WTC11 (cell line): ENCODE measurements at regions of chr17 and their contacts with region 1.

Region 1: GRCh38 chr17:17280613-17281549 is at the start of gene COPS3:
- DNase-seq: peak; percentile 95
- ATAC-seq: peak; percentile 94
- H3K4me3 Mint-ChIP-seq: peak within 1 kb of the TSS; percentile 84
- H3K27ac Mint-ChIP-seq: peak within 1 kb of the TSS; percentile 98
- H3K4me1 Mint-ChIP-seq: peaks cover 19% of the 10 kb centered on the region
- H3K27me3 Mint-ChIP-seq: no peaks in the 10 kb centered on the region; the same call in 1 of the 2 replicates
- CTCF ChIP-seq: no peak
- total RNA-seq, gene COPS3: 71.6 to 78.3 TPM (median 74.8 TPM) in 3 replicates

Region 2: GRCh38 chr17:17269926-17270773 is 10.7 kb before region 1 on chr17:
- CTCF ChIA-PET with region 1: interaction called, 17 read pairs
- POLR2A ChIA-PET with region 1: interaction called, 4 read pairs
- DNase-seq: peak; percentile 50
- ATAC-seq: peak; percentile 39; the same call in 1 of the 2 replicates
- H3K4me3 Mint-ChIP-seq: no peak overlapping the region
- H3K27ac Mint-ChIP-seq: no peak overlapping the region
- H3K4me1 Mint-ChIP-seq: no peaks in the 10 kb centered on the region
- H3K27me3 Mint-ChIP-seq: no peaks in the 10 kb centered on the region
- CTCF ChIP-seq: peak; percentile 37